ENCODE measurements at regions of chr15 and their contacts with region 1.

Region 1: GRCh38 chr15:48358229-48358641 is 27.0 kb downstream of the DUT start:
- DNase-seq: no peak

Region 2: GRCh38 chr15:48645558-48646330 is 287.5 kb after region 1 on chr15 and contains the start of gene FBN1:
- intact Hi-C with region 1: loop called (anchors 2 kb)
- DNase-seq: peak; percentile 56 to 97 (median 74)

Region 3: GRCh38 chr15:48800811-48801455 is 442.7 kb after region 1 on chr15:
- intact Hi-C with region 1: loop called (anchors 2 kb)
- DNase-seq: no peak

Region 4: GRCh38 chr15:50145451-50145872 is 1787.2 kb after region 1 on chr15:
- intact Hi-C with region 1: loop called (anchors 10 kb)
- DNase-seq: no peak

Measured in posterior cingulate gyrus (tissue), 11 donors.